ENCODE measurements at regions of chr10 and their contacts with region 1.

Region 1: DNA sequence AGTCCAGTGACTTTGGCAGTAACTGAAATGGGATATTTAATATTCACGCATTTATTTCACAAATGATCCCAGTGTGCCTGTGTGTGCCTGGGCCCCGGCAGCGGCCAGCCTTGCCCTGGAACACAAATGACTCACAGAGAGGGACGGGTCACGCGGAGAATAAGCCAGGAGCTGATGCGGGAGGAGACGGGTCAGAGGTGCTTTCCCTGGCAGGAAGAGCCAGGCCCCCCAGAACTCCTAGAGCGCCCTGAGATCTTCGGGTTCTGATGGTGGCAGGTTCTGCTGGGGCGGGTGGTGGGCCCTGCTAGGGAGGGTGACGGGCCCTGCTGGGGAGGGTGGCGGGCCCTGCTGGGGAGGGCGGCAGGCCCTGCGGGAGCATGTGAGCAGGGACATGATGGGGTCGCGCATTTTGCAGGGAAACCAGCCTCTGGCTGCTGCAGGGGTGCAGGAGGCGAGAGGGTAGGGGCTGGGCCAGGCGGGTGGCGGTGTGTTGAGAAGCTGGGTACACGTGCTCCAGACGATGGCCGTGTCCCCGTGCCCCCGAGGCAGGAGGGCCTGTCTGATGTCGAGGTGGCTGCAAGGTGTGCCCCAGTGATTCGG is 84.2 kb upstream of the DIP2C start:
- DNase-seq: peak in 1 of 2 donors; percentile 39
- ATAC-seq: no peak
- H3K4me3 ChIP-seq: no peak overlapping the region
- H3K27ac ChIP-seq: no peak overlapping the region
- H3K4me1 ChIP-seq: peaks cover 8% of the 10 kb centered on the region
- H3K27me3 ChIP-seq: no peaks in the 10 kb centered on the region
- CTCF ChIP-seq: no peak

Region 2: GRCh38 chr10:697097-697875 is 76.4 kb before region 1 on chr10:
- intact Hi-C with region 1: loop called in 1 of 2 experiments (anchors 5 kb)
- DNase-seq: no peak
- ATAC-seq: peak in 1 of 4 donors; percentile 41
- H3K4me3 ChIP-seq: no peak overlapping the region
- H3K27ac ChIP-seq: no peak overlapping the region
- H3K4me1 ChIP-seq: no peaks in the 10 kb centered on the region
- H3K27me3 ChIP-seq: peaks cover 0 to 18% (median 2%) of the 10 kb centered on the region in 3 donors
- CTCF ChIP-seq: no peak

Region 3: GRCh38 chr10:740936-741431 is 32.7 kb before region 1 on chr10:
- intact Hi-C with region 1: no loop called
- DNase-seq: no peak
- ATAC-seq: no peak
- H3K4me3 ChIP-seq: no peak overlapping the region
- H3K27ac ChIP-seq: no peak overlapping the region
- H3K4me1 ChIP-seq: no peaks in the 10 kb centered on the region
- H3K27me3 ChIP-seq: no peaks in the 10 kb centered on the region
- CTCF ChIP-seq: no peak

Region 4: DNA sequence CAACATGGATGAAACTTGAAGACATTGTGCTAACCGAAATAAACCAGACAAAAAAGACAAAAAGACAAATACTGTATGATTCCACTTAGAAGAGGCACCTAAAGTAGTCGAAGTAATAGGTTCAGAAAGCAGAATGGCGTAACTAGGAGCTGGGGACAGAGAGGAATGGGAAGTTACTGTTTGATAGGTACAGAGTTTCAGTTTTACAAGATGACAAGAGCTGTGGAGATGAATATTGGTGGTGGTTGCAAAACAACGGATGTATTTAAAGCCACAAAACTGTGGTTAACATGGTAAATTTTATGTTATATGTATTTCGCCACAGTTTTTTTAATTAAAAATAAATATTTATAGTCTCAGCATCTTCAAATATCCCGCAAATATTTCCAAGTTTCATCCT is 20.1 kb before region 1 on chr10:
- intact Hi-C with region 1: no loop called
- DNase-seq: no peak
- ATAC-seq: no peak
- H3K4me3 ChIP-seq: no peak overlapping the region
- H3K27ac ChIP-seq: no peak overlapping the region
- H3K4me1 ChIP-seq: no peaks in the 10 kb centered on the region
- H3K27me3 ChIP-seq: no peaks in the 10 kb centered on the region
- CTCF ChIP-seq: no peak

Region 5: GRCh38 chr10:865257-865656 is 91.6 kb after region 1 on chr10:
- intact Hi-C with region 1: no loop called
- DNase-seq: no peak
- ATAC-seq: no peak
- H3K4me3 ChIP-seq: no peak overlapping the region
- H3K27ac ChIP-seq: no peak overlapping the region
- H3K4me1 ChIP-seq: peaks cover 33% of the 10 kb centered on the region
- H3K27me3 ChIP-seq: no peaks in the 10 kb centered on the region
- CTCF ChIP-seq: no peak

Measured in psoas muscle (tissue), 8 donors.